ENCODE measurements at regions of chr5 and their contacts with region 1.

Region 1: GRCh38 chr5:151239237-151239861 is 13.6 kb upstream of the GM2A start:
- DNase-seq: peak; percentile 58
- ATAC-seq: peak; percentile 60
- H3K4me3 Mint-ChIP-seq: peak overlapping the region; percentile 77
- H3K27ac Mint-ChIP-seq: peak overlapping the region; percentile 72
- H3K4me1 Mint-ChIP-seq: peaks cover 95% of the 10 kb centered on the region
- H3K27me3 Mint-ChIP-seq: no peaks in the 10 kb centered on the region
- CTCF ChIP-seq: peak; percentile 85

Region 2: DNA sequence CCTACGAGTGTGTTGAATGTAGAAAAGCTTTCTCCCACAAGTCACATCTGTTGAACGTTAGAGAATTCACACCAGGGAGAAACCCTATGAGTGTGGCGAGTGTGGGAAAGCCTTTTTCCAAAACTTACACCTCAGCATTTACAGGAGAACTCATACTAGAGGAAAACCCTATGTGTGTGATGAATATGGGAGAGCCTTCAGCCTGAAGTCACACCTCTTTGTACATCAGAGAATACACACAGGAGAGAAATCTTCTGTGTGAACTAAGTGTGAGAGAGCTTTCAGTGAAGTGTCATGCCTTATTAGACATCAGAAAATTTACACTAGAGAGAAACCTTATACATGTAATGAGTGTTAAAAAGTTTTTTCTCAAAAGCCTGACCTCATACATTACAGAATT is 260.8 kb before region 1 on chr5:
- CTCF ChIA-PET with region 1: no interaction called
- POLR2A ChIA-PET with region 1: no interaction called
- intact Hi-C with region 1: no loop called
- DNase-seq: no peak
- ATAC-seq: no peak
- H3K4me3 Mint-ChIP-seq: no peak overlapping the region
- H3K27ac Mint-ChIP-seq: no peak overlapping the region
- H3K4me1 Mint-ChIP-seq: no peaks in the 10 kb centered on the region
- H3K27me3 Mint-ChIP-seq: peaks cover 10% of the 10 kb centered on the region
- CTCF ChIP-seq: no peak

Region 3: GRCh38 chr5:151174612-151175101 is 64.7 kb before region 1 on chr5:
- CTCF ChIA-PET with region 1: interaction called, 122 read pairs
- POLR2A ChIA-PET with region 1: interaction called, 5 read pairs
- intact Hi-C with region 1: no loop called
- DNase-seq: no peak
- ATAC-seq: no peak
- H3K4me3 Mint-ChIP-seq: no peak overlapping the region
- H3K27ac Mint-ChIP-seq: no peak overlapping the region
- H3K4me1 Mint-ChIP-seq: peaks cover 58% of the 10 kb centered on the region
- H3K27me3 Mint-ChIP-seq: no peaks in the 10 kb centered on the region
- CTCF ChIP-seq: no peak

Region 4: DNA sequence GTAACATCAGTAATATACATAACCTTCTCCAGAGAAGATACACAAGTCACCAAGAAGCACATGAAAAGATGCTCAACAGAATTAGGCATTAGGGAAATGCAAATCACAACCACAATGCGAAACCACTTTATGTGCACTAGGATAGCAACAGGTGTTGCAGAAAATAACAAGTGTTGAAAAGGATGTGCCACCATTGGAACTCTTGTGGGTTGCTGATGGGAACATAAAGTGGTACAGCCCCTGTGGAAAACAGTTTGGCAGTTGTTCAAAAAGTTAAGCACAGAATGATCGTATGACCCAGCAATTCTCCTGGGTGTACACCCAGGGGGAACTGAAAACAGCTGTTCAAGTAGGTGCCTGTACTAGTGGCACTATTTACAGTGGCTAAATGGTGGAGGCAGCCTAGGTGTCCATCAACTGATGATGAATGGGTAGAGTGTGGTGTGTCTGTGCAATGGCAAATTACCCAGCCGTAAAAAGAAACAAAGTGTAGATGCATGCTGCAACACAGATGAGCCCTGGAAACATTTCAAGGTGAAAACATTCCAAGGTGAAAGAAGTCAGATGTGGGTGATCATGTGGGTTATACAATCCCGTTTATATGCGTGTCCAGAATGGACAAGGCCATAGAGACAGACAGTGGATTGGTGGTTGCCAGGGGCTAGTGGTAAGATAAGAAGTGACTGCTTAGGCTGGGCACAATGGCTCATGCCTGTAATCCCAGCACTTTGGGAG is 42.6 kb before region 1 on chr5:
- CTCF ChIA-PET with region 1: interaction called, 10 read pairs
- POLR2A ChIA-PET with region 1: interaction called, 4 read pairs
- intact Hi-C with region 1: loop called (anchors 1 kb)
- DNase-seq: peak; percentile 31
- ATAC-seq: peak; percentile 95
- H3K4me3 Mint-ChIP-seq: peak overlapping the region; percentile 29
- H3K27ac Mint-ChIP-seq: peak overlapping the region; percentile 84
- H3K4me1 Mint-ChIP-seq: peaks cover 75% of the 10 kb centered on the region
- H3K27me3 Mint-ChIP-seq: no peaks in the 10 kb centered on the region
- CTCF ChIP-seq: no peak

Region 5: DNA sequence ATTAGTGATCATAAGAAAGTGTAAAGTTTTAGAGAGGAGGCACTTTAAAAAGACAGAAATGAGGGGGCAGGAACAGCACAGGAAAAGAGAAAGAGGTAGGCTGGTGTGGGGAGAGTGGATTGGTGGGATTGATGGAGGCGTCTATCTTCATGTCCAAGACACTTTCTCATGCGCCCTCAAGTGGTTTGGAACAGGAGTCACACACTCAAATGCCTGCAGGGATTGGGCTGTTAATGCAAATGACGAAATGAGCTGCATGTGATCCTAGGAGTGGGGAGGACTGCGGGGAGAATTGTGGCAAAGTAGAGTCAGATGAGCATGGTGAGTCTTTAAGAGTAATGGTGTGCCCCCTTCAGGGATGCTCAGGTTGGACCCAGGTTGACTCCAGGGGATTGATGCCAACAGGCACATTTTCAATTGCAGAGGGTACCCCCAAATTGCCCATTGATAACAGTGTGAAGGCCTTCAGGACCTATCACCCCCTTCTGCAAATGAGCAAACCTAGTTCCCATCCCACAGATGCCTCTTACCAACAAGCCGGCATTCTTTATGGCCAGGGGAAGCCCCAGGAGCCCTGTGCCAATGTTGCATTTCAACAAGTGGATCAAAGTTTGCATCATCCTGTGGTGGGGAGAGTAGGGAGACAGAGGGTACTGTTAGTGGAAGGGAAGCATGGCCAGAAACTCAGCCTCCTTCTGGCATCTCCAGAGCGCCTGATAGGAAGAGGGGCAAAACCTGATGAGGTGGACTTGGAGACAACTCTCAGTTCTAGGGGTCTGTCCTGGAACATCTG is 58.9 kb after region 1 on chr5:
- CTCF ChIA-PET with region 1: interaction called, 3 read pairs
- POLR2A ChIA-PET with region 1: no interaction called
- intact Hi-C with region 1: loop called (anchors 1 kb)
- DNase-seq: no peak
- ATAC-seq: peak; percentile 58
- H3K4me3 Mint-ChIP-seq: no peak overlapping the region
- H3K27ac Mint-ChIP-seq: no peak overlapping the region
- H3K4me1 Mint-ChIP-seq: peaks cover 4% of the 10 kb centered on the region
- H3K27me3 Mint-ChIP-seq: peaks cover 15% of the 10 kb centered on the region
- CTCF ChIP-seq: no peak

Region 6: GRCh38 chr5:151363673-151364072 is 124.3 kb after region 1 on chr5:
- CTCF ChIA-PET with region 1: no interaction called
- POLR2A ChIA-PET with region 1: no interaction called
- intact Hi-C with region 1: no loop called
- DNase-seq: no peak
- ATAC-seq: no peak
- H3K4me3 Mint-ChIP-seq: no peak overlapping the region
- H3K27ac Mint-ChIP-seq: no peak overlapping the region
- H3K4me1 Mint-ChIP-seq: no peaks in the 10 kb centered on the region
- H3K27me3 Mint-ChIP-seq: peaks cover 22% of the 10 kb centered on the region
- CTCF ChIP-seq: no peak

Measured in activated B cell treated with CpG ODN at 0.5 μM for 24 hours (primary cell).